ENCODE measurements at regions of chr22 and their contacts with region 1.

Region 1: GRCh38 chr22:43036282-43036829 is 21.4 kb upstream of the PACSIN2 start:
- H3K4me3 ChIP-seq: no peak overlapping the region
- H3K27ac ChIP-seq: no peak overlapping the region
- H3K4me1 ChIP-seq: no peaks in the 10 kb centered on the region
- CTCF ChIP-seq: no peak

Region 2: GRCh38 chr22:42863349-42863961 is 172.9 kb before region 1 on chr22:
- CTCF ChIA-PET with region 1: interaction called, 12 read pairs
- POLR2A ChIA-PET with region 1: no interaction called
- H3K4me3 ChIP-seq: no peak overlapping the region
- H3K27ac ChIP-seq: no peak overlapping the region
- H3K4me1 ChIP-seq: no peaks in the 10 kb centered on the region
- CTCF ChIP-seq: no peak

Region 3: GRCh38 chr22:42990139-42990767 is 46.1 kb before region 1 on chr22:
- CTCF ChIA-PET with region 1: interaction called, 10 read pairs
- POLR2A ChIA-PET with region 1: no interaction called
- H3K4me3 ChIP-seq: no peak overlapping the region
- H3K27ac ChIP-seq: no peak overlapping the region
- H3K4me1 ChIP-seq: peaks cover 16% of the 10 kb centered on the region; the same call in 1 of the 2 replicates
- CTCF ChIP-seq: no peak; the same call in 1 of the 2 replicates

Region 4: GRCh38 chr22:43050995-43051394 is 14.6 kb after region 1 on chr22:
- CTCF ChIA-PET with region 1: interaction called, 13 read pairs
- POLR2A ChIA-PET with region 1: interaction called, 8 read pairs
- H3K4me3 ChIP-seq: no peak overlapping the region
- H3K27ac ChIP-seq: no peak overlapping the region
- H3K4me1 ChIP-seq: no peaks in the 10 kb centered on the region
- CTCF ChIP-seq: no peak

Measured in HEK293 (cell line).